Gastrocnemius medialis (tissue), 4 donors: ENCODE measurements at regions of chr7 and their contacts with region 1.

Region 1: DNA sequence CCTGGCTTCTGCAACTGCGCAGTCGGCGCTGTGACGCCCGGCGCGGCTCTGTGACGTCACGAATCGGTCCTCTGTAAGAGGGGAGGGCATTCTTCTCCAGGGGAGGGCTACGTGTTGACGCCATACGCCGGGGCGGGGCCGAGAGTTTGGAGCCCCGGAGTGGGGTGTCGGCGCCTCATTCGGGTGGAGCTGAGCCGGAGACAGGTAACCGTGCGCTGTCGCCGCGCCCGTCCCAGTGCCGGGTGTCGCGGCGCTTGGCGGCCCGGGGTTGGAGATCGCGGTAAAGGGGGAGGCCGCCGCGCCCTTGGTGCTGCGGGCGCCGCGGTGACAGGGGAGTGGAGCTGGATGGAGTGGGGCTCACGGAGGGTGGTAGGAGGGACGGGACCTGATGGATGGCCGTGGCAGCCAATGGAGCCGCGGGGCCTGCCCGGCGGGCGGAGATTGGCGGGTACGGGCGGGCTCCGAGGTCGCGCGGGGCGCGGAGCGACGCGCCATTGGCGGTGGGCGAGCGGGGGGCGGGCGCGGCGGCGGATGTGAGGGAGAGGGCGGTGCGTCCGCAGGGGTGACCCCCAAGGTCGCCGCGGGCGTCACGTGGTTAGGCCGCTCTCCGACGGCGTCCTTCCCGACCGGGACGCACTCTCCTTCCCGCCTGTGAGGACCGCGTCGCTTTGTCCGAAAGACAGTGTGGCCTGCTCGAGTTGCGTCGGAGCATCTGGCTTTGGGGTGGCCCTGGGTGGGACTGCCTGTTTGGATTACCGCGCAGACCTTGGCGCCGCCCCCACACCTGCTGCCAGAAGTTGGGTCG is at the start of gene OGDH:
- DNase-seq: peak; percentile 98
- ATAC-seq: peak; percentile 88 to 92
- H3K4me3 ChIP-seq: peak within 1 kb of the TSS; percentile 72 to 88 (median 82)
- H3K27ac ChIP-seq: peak within 1 kb of the TSS; percentile 91 to 99 (median 96)
- H3K4me1 ChIP-seq: peaks cover 13 to 14% of the 10 kb centered on the region in 2 donors
- H3K27me3 ChIP-seq: no peaks in the 10 kb centered on the region
- CTCF ChIP-seq: peak in 1 of 5 experiments; percentile 23
- POLR2A ChIP-seq: peak; percentile 98
- total RNA-seq, gene OGDH: 224 to 462 (median 396) TPM

Region 2: DNA sequence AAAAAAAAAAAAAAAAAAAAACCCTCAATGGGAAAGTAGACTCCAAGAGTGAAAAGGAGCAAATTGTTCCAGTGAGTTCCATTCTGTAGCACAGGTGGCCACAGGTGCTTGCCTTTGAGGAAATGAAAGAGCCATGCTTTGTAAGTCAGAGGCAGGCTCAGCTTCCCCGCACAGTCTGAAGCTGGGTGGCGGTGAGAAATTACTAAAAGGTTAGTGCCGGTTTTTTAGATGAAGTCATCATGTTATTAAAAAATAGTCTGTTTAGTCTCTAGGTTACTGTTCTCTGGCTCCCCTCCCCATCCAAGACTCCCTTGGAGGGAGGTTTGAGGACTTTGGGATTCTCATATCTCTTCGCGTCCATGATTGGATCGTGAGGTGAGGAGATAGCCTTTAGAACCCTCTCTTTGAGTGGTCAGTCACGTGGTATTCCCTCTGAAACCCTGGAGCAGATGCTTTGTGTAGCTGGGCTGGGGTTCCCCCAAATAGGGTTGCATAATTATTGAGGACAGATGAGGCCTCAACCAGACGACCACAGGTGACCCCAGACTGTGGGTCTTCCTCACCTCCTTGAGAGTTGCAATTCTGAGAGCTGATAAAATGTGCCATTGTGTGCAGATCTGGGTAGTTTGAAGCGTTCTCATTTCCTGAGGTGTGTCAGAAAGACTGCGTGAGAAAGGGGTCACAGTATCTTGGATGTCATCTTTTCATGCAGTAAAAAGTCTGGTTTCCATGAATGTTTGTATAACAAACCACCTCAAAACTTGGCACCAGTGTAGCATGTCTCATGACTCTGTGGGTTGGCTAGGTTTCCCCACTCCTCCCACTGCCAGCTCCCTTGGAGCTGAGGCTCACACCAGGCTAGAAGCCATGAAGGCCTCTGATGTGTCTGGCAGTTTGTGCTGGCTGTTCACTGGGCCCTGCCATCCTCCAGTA is 26.9 kb after region 1 on chr7:
- in situ Hi-C with region 1: no loop called
- intact Hi-C with region 1: loop called (anchors 2 kb)
- DNase-seq: peak in 1 of 2 donors; percentile 84
- ATAC-seq: peak; percentile 31 to 41
- H3K4me3 ChIP-seq: no peak overlapping the region
- H3K27ac ChIP-seq: peak overlapping the region; percentile 85 to 94 (median 92)
- H3K4me1 ChIP-seq: peaks cover 87 to 93% of the 10 kb centered on the region in 2 donors
- H3K27me3 ChIP-seq: no peaks in the 10 kb centered on the region
- CTCF ChIP-seq: no peak
- POLR2A ChIP-seq: no peak

Region 3: DNA sequence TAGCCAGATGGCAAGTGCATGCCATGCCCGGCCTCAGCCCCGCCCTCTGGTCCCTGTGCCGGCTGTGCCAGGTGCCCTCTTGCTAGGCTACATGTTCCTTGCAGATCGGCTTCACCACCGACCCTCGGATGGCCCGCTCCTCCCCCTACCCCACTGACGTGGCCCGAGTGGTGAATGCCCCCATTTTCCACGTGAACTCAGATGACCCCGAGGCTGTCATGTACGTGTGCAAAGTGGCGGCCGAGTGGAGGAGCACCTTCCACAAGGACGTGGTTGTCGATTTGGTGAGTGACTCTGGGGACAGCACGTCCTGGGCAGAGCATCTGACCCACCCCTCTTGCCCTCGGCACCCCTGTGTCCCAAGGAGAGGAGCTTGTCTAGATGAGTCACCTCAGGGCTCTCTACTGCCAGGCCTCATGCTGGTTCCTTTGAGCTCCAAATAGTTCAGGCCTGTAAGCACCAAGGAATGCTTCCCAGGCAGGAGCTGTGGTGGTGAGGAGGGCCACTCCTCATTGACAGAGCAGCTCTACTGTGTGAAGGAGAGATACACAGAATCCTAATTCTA is 87.2 kb after region 1 on chr7:
- in situ Hi-C with region 1: no loop called
- intact Hi-C with region 1: loop called (anchors 5 kb)
- DNase-seq: peak; percentile 91 to 97
- ATAC-seq: peak; percentile 90 to 96
- H3K4me3 ChIP-seq: peak overlapping the region in 1 of 4 donors; percentile 27
- H3K27ac ChIP-seq: peak overlapping the region; percentile 87 to 93 (median 90)
- H3K4me1 ChIP-seq: peaks cover 0 to 10% of the 10 kb centered on the region in 2 donors
- H3K27me3 ChIP-seq: no peaks in the 10 kb centered on the region
- CTCF ChIP-seq: no peak
- POLR2A ChIP-seq: peak; percentile 57 to 75

Region 4: DNA sequence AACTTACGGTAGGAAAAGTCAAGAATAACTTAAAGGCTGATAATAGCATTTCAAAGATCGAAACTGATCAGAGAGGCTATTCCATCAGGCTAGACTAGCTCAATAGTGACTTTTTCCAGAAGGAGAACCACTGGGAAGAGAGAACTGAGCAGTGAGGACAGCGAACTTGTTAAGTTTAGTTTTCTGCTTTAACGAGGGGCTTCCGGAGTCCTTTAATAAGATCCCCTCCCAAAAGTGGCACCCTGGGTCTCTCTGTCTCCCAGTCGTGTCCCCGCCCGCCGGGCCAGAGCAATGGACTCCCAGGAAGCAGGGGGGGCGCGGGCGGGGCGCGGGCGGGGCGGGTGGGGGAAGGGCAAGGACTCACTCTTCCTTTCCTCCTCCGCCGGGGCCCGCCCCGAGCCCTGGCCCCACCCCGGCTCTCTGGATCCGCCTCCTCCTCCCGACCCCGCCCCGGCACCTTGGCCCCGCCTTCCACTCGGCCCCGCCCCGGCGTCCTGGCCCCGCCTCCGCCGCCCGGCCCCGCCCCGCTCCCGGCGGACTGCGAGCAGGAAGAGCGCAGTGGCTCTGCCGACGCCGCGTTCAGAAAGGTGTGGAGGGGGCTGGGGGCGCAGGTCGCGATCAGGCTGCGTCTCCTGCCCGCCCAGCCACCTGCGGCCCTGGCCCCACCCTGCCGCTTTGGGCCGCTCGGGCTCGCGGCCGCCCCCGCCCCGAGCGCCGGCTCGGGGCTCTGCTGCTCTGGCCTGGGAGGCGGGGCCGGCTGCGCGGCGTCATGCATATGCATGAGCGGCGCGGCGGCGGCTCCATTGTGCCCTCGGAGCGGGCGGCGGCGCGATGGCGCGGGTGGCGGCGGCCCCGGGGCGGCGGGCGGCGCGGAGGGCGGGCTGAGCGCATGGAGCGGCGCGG is 141.6 kb after region 1 on chr7 and contains the start of gene ZMIZ2:
- in situ Hi-C with region 1: no loop called
- intact Hi-C with region 1: loop called (anchors 5 kb)
- DNase-seq: peak; percentile 90 to 91
- ATAC-seq: peak; percentile 86 to 88
- H3K4me3 ChIP-seq: peak within 1 kb of the TSS; percentile 72 to 84 (median 78)
- H3K27ac ChIP-seq: peak within 1 kb of the TSS; percentile 89 to 97 (median 94)
- H3K4me1 ChIP-seq: peaks cover 21 to 28% of the 10 kb centered on the region in 2 donors
- H3K27me3 ChIP-seq: no peaks in the 10 kb centered on the region
- CTCF ChIP-seq: no peak
- POLR2A ChIP-seq: peak; percentile 83 to 84
- total RNA-seq, gene ZMIZ2: 10.7 to 19.8 (median 14.0) TPM

Region 5: GRCh38 chr7:44797329-44798251 is 190.9 kb after region 1 on chr7:
- in situ Hi-C with region 1: no loop called
- intact Hi-C with region 1: loop called (anchors 1 kb)
- DNase-seq: peak; percentile 81 to 86
- ATAC-seq: peak; percentile 75 to 76
- H3K4me3 ChIP-seq: peak overlapping the region; percentile 72 to 79 (median 75)
- H3K27ac ChIP-seq: peak overlapping the region; percentile 89 to 97 (median 96)
- H3K4me1 ChIP-seq: peaks cover 16 to 23% of the 10 kb centered on the region in 2 donors
- H3K27me3 ChIP-seq: no peaks in the 10 kb centered on the region
- CTCF ChIP-seq: peak in 2 of 5 experiments; percentile 29 to 52
- POLR2A ChIP-seq: peak in 1 of 2 donors; percentile 27